ENCODE measurements at regions of chr11 and their contacts with region 1.

Region 1: DNA sequence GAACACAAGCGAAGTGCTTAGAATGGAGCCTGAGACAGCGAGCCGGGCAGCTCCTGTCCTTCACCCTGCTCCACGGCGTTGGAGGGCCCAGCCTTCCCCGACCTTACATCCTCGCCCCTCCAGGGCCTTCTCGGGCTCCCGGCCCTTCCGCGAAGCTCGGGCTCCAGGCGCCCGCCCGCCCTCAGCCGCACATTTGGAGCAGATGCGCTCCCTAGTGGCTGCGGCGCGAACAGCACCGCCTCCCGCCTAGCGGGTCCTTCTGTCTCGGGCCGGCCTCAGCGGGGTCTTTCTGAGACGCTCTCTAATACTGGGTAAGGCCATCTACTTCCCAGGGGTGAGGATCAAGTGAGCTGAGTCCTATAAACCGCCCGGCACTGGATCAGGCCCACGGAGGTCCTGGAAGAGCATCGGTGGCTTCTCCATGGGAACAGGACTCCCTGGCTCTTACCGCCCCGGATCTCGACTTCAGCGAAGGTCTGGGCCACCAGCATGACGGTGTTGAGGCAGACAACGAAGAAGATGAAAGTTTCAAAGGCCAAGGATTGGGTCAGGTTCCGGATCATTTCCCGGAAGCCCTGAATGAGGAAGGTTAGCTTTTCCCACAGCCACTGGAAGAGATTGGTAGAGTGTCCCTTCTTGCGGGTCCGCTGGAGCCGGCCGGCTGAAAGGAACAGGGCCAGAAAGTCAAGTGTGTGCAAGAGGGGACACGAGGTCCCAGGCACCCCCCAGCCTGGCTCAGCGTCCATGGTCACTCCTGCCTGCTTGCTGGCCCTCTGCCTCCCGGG is 3.7 kb downstream of the CATSPER1 start:
- DNase-seq: no peak
- ATAC-seq: peak; percentile 95
- H3K4me3 ChIP-seq: no peak overlapping the region
- H3K27ac ChIP-seq: no peak overlapping the region
- H3K4me1 ChIP-seq: no peaks in the 10 kb centered on the region
- H3K27me3 ChIP-seq: 0 out of 4 replicates have a peak, but pooled peaks cover 0 to 3% of the 10 kb centered on the region in 2 experiments
- CTCF ChIP-seq: peak; percentile 84 to 97 (median 91)
- EP300 ChIP-seq: no peak
- POLR2A ChIP-seq: no peak
- RAD21 ChIP-seq: peak; percentile 60

Region 2: DNA sequence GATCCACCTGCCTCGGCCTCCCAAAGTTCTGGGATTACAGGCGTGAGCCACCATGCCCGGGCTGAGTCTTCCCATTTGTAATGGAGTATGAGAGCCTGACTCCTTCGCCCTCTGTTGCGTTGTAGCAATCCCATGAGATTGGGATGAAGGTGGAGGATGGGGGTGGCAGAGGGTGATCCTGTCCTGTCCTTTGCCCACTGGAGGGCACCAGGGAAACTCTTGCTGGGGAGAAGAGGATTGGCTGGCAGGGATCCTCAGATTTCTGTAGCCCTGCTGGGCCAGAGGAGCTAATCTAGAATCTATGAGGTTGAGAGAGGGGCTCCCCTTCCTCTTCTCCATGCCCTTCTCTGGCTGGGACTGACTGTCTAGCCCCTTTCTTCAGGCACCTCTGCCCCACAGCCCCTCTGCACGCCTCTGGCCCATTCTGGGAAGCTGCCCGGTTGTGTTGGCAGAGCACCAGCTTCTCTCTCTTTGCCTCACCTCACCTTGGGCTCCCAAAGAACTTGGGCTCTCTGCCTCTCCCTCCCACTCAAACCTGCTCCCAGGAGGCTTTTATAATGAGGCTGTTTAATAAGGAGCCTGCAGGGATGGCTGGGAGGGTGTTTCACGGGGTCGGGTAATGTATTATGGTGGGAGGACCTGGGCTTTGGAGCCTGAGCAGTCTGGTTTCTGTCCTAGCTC is 13.2 kb after region 1 on chr11:
- CTCF ChIA-PET with region 1: interaction called, 19 read pairs
- POLR2A ChIA-PET with region 1: no interaction called
- RAD21 ChIA-PET with region 1: no interaction called
- SMC1A ChIA-PET with region 1: no interaction called
- in situ Hi-C with region 1: no loop called
- intact Hi-C with region 1: no loop called
- DNase-seq: no peak
- ATAC-seq: no peak
- H3K4me3 ChIP-seq: no peak overlapping the region
- H3K27ac ChIP-seq: no peak overlapping the region
- H3K4me1 ChIP-seq: no peaks in the 10 kb centered on the region
- H3K27me3 ChIP-seq: no peaks in the 10 kb centered on the region
- CTCF ChIP-seq: no peak
- EP300 ChIP-seq: no peak
- POLR2A ChIP-seq: no peak
- RAD21 ChIP-seq: no peak

Region 3: DNA sequence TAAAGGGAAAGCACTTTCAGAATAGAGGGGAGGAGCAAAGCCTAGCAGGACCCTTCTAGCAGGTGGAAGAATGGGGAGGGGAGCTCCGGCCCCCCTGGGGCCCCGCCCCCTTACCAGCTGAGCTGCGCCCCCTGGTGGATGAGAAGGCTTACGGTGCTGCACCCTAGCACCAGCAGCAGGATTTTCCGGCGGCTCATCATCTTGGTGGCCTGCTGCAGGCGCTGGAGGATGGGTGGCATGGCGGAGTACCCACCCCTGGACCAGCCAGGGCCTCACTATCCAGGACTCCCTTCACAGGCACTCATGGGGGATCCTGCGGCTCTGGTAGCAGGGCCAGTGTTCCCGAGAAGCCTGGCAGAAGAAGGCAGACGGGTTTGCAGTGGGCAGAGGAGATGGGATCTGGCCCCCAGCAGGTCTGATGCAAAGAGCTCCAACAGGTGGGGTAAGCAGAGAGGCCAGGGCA is 22.6 kb after region 1 on chr11:
- CTCF ChIA-PET with region 1: interaction called, 43 read pairs
- POLR2A ChIA-PET with region 1: no interaction called
- RAD21 ChIA-PET with region 1: interaction called, 4 read pairs
- SMC1A ChIA-PET with region 1: interaction called, 10 read pairs
- in situ Hi-C with region 1: no loop called
- intact Hi-C with region 1: no loop called
- DNase-seq: no peak
- ATAC-seq: peak; percentile 98
- H3K4me3 ChIP-seq: no peak overlapping the region
- H3K27ac ChIP-seq: no peak overlapping the region
- H3K4me1 ChIP-seq: peaks cover 2% of the 10 kb centered on the region; the same call in 1 of the 2 replicates
- H3K27me3 ChIP-seq: no peaks in the 10 kb centered on the region
- CTCF ChIP-seq: peak; percentile 86 to 94 (median 89)
- EP300 ChIP-seq: no peak
- POLR2A ChIP-seq: no peak
- RAD21 ChIP-seq: peak; percentile 45

Region 4: GRCh38 chr11:66051766-66052663 is 29.4 kb after region 1 on chr11 and contains the start of gene SF3B2:
- CTCF ChIA-PET with region 1: interaction called, 43 read pairs
- POLR2A ChIA-PET with region 1: no interaction called
- RAD21 ChIA-PET with region 1: no interaction called
- SMC1A ChIA-PET with region 1: no interaction called
- in situ Hi-C with region 1: no loop called
- intact Hi-C with region 1: no loop called
- DNase-seq: peak; percentile 96
- ATAC-seq: peak; percentile 98
- H3K4me3 ChIP-seq: peak within 1 kb of the TSS; percentile 98
- H3K27ac ChIP-seq: peak within 1 kb of the TSS; percentile 82
- H3K4me1 ChIP-seq: peaks cover 15% of the 10 kb centered on the region
- H3K27me3 ChIP-seq: no peaks in the 10 kb centered on the region
- CTCF ChIP-seq: no peak
- EP300 ChIP-seq: no peak
- POLR2A ChIP-seq: peak; percentile 97
- RAD21 ChIP-seq: no peak
- polyA plus RNA-seq, gene SF3B2: 56.3 to 123 TPM

Region 5: DNA sequence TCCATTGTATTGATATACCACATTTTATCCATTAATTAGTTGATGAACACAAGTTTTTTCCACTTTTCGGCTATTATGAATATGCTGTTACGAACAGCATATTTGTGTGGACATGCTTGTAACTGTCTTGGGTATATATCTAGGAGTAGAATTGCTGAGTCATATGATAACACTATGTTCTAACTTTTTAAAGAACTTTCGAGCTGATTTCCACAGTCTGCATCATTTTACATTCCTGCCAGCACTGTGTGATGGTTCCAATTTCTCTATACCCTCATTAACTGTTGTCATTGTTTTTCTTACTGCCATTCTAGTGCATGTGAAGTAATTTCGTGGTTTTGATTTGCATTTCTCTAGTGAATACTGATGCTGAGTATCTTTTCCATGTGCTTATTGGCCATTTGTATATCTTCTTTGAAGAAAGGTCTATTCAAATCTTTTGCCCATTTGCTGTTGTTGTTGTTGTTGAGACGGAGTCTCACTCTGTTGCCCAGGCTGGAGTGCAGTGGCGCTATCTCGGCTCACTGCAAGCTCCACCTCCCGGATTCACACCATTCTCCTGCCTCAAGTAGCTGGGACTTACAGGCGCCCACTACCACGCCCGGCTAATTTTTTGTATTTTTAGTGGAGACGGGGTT is 813.3 kb after region 1 on chr11:
- CTCF ChIA-PET with region 1: no interaction called
- POLR2A ChIA-PET with region 1: no interaction called
- RAD21 ChIA-PET with region 1: no interaction called
- SMC1A ChIA-PET with region 1: no interaction called
- in situ Hi-C with region 1: no loop called
- intact Hi-C with region 1: no loop called
- DNase-seq: no peak
- ATAC-seq: no peak
- H3K4me3 ChIP-seq: no peak overlapping the region
- H3K27ac ChIP-seq: no peak overlapping the region
- H3K4me1 ChIP-seq: no peaks in the 10 kb centered on the region
- H3K27me3 ChIP-seq: no peaks in the 10 kb centered on the region
- CTCF ChIP-seq: no peak
- EP300 ChIP-seq: no peak
- POLR2A ChIP-seq: no peak
- RAD21 ChIP-seq: no peak

Measured in GM12878 (cell line).